Activated CD8-positive, alpha-beta T cell treated with anti-CD3 and anti-CD28 coated beads, Interleukin-2, amount 10 ng/mL, durations not matched to agents 7 days and 5 days (primary cell): ENCODE measurements at regions of chr4 and their contacts with region 1.

Region 1: DNA sequence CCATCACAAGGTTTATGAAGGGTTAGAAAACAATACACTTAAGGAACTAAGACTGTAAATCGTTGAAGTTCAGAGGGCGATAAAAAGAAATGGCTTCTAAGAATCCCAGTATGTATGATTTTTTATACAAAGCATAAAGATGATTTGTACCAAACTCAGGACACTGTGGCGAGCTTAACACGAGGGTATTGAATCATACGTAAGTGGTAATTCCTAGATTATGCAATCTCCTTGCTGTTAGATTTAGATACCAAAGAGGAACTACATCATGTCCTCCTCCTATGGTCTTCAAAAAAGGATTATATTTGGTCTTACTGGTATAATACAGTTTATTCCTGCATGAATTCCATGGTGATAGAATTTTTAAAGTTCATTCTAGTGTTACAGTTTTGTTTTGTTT is 23.9 kb downstream of the NFKB1 start:
- DNase-seq: no peak
- ATAC-seq: no peak
- H3K4me3 Mint-ChIP-seq: no peak overlapping the region
- H3K27ac Mint-ChIP-seq: peak overlapping the region; percentile 74
- H3K4me1 Mint-ChIP-seq: peaks cover 92% of the 10 kb centered on the region
- H3K27me3 Mint-ChIP-seq: no peaks in the 10 kb centered on the region

Region 2: GRCh38 chr4:102537269-102537668 is 12.2 kb after region 1 on chr4:
- CTCF ChIA-PET with region 1: interaction called, 11 read pairs
- POLR2A ChIA-PET with region 1: interaction called, 5 read pairs
- DNase-seq: no peak
- ATAC-seq: no peak
- H3K4me3 Mint-ChIP-seq: no peak overlapping the region
- H3K27ac Mint-ChIP-seq: no peak overlapping the region
- H3K4me1 Mint-ChIP-seq: peaks cover 65% of the 10 kb centered on the region
- H3K27me3 Mint-ChIP-seq: no peaks in the 10 kb centered on the region

Region 3: GRCh38 chr4:102569200-102569599 is 44.1 kb after region 1 on chr4:
- CTCF ChIA-PET with region 1: no interaction called
- POLR2A ChIA-PET with region 1: no interaction called
- DNase-seq: no peak
- ATAC-seq: no peak
- H3K4me3 Mint-ChIP-seq: no peak overlapping the region
- H3K27ac Mint-ChIP-seq: no peak overlapping the region
- H3K4me1 Mint-ChIP-seq: peaks cover 61% of the 10 kb centered on the region
- H3K27me3 Mint-ChIP-seq: no peaks in the 10 kb centered on the region

Region 4: GRCh38 chr4:102598086-102598761 is 73.1 kb after region 1 on chr4:
- CTCF ChIA-PET with region 1: no interaction called
- POLR2A ChIA-PET with region 1: no interaction called
- DNase-seq: peak; percentile 75
- ATAC-seq: peak; percentile 93
- H3K4me3 Mint-ChIP-seq: peak overlapping the region; percentile 61
- H3K27ac Mint-ChIP-seq: peak overlapping the region; percentile 98
- H3K4me1 Mint-ChIP-seq: peaks cover 84% of the 10 kb centered on the region
- H3K27me3 Mint-ChIP-seq: no peaks in the 10 kb centered on the region